Heart left ventricle (tissue), 16 donors: ENCODE measurements at regions of chr2 and their contacts with region 1.

Region 1: GRCh38 chr2:231104115-231104713 is 20.6 kb downstream of the HTR2B start:
- DNase-seq: peak in 3 of 5 donors; percentile 34 to 48 (median 41)
- ATAC-seq: peak; percentile 51 to 82 (median 78)
- H3K4me3 ChIP-seq: no peak overlapping the region
- H3K27ac ChIP-seq: peak overlapping the region in 2 of 12 donors; percentile 2 to 65
- H3K4me1 ChIP-seq: peaks cover 0 to 23% (median 3%) of the 10 kb centered on the region in 12 donors
- H3K27me3 ChIP-seq: no peaks in the 10 kb centered on the region
- CTCF ChIP-seq: peak; percentile 65 to 91 (median 84)
- POLR2A ChIP-seq: no peak

Region 2: GRCh38 chr2:231191896-231192872 is 88.0 kb after region 1 on chr2:
- intact Hi-C with region 1: loop called in 9 of 10 experiments (anchors 1 to 10 kb)
- DNase-seq: peak; percentile 69 to 85 (median 79)
- ATAC-seq: peak; percentile 58 to 76 (median 67)
- H3K4me3 ChIP-seq: no peak overlapping the region
- H3K27ac ChIP-seq: peak overlapping the region in 11 of 12 donors; percentile 15 to 95 (median 85)
- H3K4me1 ChIP-seq: peaks cover 0 to 40% (median 20%) of the 10 kb centered on the region in 12 donors
- H3K27me3 ChIP-seq: peaks cover 0 to 6% (median 0%) of the 10 kb centered on the region in 9 donors
- CTCF ChIP-seq: peak; percentile 39 to 83 (median 58)
- POLR2A ChIP-seq: no peak

Region 3: DNA sequence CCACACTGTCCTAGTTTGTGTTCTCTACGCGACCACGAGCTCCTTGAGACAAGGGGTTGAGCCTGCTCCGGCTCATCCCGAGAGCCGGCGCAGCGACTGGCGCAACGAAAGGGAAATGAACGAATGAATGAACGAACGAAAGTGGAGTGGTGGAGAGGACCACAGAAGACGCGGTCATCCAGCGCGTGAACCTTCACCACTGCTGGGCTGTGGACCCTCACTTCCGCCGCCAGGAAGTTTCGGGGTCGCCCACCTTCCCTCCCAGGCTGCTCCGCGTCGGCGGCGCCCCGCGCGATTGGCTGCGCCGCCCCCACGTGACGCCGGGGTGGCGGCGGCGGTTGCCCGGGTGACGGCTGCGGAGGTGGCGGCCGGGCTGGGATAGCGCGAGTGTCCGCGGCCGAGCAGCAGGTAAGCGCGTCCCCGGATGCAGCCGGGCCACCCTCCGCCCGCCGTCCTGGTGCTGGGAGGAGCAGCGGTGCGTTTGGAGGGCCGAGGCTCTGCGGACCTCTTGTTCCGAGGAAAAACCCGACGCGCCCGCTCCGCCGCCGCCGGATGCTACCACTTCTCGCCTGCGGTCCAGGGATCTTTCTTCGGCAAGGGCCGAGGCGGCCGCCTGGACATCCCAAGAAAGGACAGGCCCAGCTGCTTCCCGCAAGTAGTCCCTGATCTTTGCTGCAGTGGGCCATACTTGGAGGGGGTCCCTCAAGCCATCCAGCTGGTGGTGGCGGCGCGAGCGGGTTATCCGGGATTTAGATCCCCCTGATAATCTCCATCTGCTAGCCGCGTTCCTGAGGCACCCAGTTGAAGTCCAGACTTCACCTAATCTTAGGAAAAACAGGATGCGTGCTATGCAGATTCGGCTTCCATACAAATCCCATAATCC is 94.3 kb after region 1 on chr2 and contains the start of gene ARMC9:
- intact Hi-C with region 1: loop called in 8 of 10 experiments (anchors 2 to 10 kb)
- DNase-seq: peak; percentile 70 to 88 (median 80)
- ATAC-seq: peak; percentile 81 to 99 (median 97)
- H3K4me3 ChIP-seq: peak within 1 kb of the TSS; percentile 52 to 94 (median 84)
- H3K27ac ChIP-seq: peak within 1 kb of the TSS in 10 of 12 donors; percentile 4 to 79 (median 46)
- H3K4me1 ChIP-seq: peaks cover 0 to 17% (median 10%) of the 10 kb centered on the region in 12 donors
- H3K27me3 ChIP-seq: no peaks in the 10 kb centered on the region
- CTCF ChIP-seq: peak in 1 of 12 donors; percentile 6
- POLR2A ChIP-seq: peak in 1 of 2 donors; percentile 41
- total RNA-seq, gene ARMC9: 1.3 to 4.7 (median 3.4) TPM

Region 4: GRCh38 chr2:231297108-231297908 is 193.1 kb after region 1 on chr2:
- intact Hi-C with region 1: loop called in 1 of 10 experiments (anchors 10 kb)
- DNase-seq: peak; percentile 45 to 77 (median 61)
- ATAC-seq: peak; percentile 39 to 79 (median 76)
- H3K4me3 ChIP-seq: no peak overlapping the region
- H3K27ac ChIP-seq: peak overlapping the region in 7 of 12 donors; percentile 23 to 55 (median 29)
- H3K4me1 ChIP-seq: peaks cover 0 to 39% (median 6%) of the 10 kb centered on the region in 12 donors
- H3K27me3 ChIP-seq: no peaks in the 10 kb centered on the region
- CTCF ChIP-seq: peak; percentile 39 to 78 (median 68)
- POLR2A ChIP-seq: no peak

Region 5: DNA sequence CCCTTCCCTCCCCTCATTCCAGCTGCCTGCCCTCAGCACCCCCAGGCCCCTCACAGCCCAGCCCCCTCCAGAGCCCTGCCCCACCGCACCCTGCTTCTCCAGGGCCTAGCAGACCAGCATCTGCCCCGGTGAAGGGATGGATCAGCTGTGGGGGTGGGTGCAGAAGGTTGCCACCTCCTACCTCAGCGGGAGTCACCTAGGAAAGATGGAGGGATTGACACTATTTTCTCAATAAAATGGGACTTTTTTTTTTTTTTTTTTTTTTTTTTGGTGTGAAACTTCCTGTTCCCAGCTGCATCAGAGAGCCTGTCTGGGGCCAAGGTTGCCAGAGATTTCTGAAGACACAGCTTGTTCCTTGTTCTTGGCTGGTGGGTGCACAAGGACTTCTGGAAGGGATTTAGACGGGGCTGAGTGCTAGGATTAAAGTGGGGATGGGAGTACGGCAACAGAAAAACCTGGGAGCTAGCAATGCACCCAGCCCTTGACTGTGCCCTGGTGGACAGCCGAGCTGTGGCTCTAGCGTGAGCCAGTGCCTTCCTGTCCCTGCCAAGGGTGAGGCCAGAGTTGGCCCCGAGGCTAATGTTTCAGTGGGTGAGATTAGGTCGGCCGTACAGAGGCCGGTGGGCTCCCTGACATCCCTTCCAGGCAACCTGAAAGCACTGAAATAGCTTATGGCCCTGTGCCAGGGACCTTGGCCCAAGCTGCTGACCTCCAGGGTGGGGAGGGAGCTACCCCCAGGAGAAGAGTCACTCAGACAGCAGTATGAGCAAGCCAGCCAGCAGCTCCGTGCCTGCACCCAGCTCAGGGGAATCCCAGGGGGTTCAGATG is 295.9 kb after region 1 on chr2:
- intact Hi-C with region 1: loop called in 2 of 10 experiments (anchors 5 to 10 kb)
- DNase-seq: peak in 4 of 5 donors; percentile 47 to 81 (median 62)
- ATAC-seq: peak; percentile 87 to 92 (median 89)
- H3K4me3 ChIP-seq: peak overlapping the region in 1 of 12 donors; percentile 4
- H3K27ac ChIP-seq: peak overlapping the region in 11 of 12 donors; percentile 2 to 83 (median 54)
- H3K4me1 ChIP-seq: peaks cover 0 to 41% (median 14%) of the 10 kb centered on the region in 12 donors
- H3K27me3 ChIP-seq: peaks cover 0 to 16% (median 3%) of the 10 kb centered on the region in 9 donors
- CTCF ChIP-seq: peak in 7 of 12 donors; percentile 10 to 42 (median 30)
- POLR2A ChIP-seq: no peak

Region 6: DNA sequence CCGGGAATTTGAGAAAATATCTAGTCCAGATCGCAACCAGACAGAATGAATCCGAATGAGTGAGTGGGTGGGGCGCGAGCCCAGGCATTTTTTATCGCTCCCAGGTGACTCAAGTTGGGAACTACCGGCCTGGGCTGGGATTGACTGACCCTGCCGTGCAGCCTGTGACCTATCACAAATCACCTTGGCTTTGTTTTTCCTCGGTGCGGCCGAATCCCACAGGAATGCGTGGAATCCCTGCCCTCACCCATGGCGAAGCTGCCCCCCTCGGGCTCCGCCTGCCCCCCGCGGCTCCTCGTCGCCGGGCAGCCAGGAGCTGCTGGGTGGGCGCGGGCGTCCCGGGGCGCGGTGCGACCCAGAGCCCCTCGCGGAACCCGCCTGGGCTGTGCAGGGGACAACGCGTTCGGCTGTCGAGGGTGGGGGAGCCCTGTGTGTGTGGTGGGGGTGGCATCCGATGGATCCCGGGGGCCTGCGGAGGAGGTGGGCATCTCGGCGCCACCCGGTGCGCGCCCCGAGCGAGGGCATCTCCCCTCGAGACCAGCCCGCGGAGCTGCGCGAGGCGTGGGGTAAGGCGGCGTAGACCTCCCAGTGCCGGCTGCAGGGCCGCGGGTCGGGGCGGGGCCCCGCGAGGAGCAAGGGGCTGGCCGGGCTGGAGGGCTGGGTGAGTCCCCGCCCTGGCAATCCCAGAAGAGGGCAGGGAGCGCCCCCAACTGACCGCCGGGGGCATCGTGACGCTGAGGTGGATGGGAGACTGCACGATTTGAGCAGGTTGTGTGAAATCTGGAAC is 307.8 kb after region 1 on chr2:
- intact Hi-C with region 1: loop called in 8 of 10 experiments (anchors 2 to 10 kb)
- DNase-seq: peak; percentile 78 to 91 (median 85)
- ATAC-seq: peak; percentile 81 to 100 (median 99)
- H3K4me3 ChIP-seq: peak overlapping the region; percentile 29 to 79 (median 64)
- H3K27ac ChIP-seq: peak overlapping the region in 2 of 12 donors; percentile 10 to 33
- H3K4me1 ChIP-seq: peaks cover 0 to 16% (median 9%) of the 10 kb centered on the region in 12 donors
- H3K27me3 ChIP-seq: peaks cover 0 to 14% (median 4%) of the 10 kb centered on the region in 9 donors
- CTCF ChIP-seq: peak; percentile 67 to 96 (median 86)
- POLR2A ChIP-seq: no peak

Region 7: GRCh38 chr2:231452799-231453508 is 348.7 kb after region 1 on chr2:
- intact Hi-C with region 1: loop called (anchors 1 to 10 kb)
- DNase-seq: no peak
- ATAC-seq: peak in 3 of 4 donors; percentile 5 to 15 (median 13)
- H3K4me3 ChIP-seq: no peak overlapping the region
- H3K27ac ChIP-seq: peak overlapping the region in 1 of 12 donors; percentile 12
- H3K4me1 ChIP-seq: peaks cover 0 to 6% (median 0%) of the 10 kb centered on the region in 12 donors
- H3K27me3 ChIP-seq: no peaks in the 10 kb centered on the region
- CTCF ChIP-seq: no peak
- POLR2A ChIP-seq: no peak